Transverse colon (tissue), 4 donors: ENCODE measurements at regions of chr2 and their contacts with region 1.

Region 1: DNA sequence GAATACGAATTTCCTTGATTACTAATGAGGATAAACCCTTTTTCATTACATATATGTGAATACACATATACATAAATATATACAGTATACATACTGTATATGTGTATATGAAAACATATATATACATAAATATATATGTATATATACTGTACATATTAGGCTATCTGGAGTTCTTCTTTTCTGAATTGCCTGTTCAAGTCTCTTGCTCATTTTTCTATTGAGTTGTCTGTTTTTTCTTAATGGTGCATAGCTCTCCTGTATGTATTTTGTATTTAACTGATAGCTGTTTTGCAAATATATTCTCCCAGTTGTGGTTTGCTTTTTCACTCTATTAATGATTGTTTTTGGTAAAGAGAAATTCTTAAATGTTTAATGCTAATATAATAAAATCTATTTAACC is 8.9 kb upstream of the GCFC2 start:
- DNase-seq: no peak
- H3K4me3 ChIP-seq: no peak overlapping the region
- H3K27ac ChIP-seq: no peak overlapping the region
- H3K4me1 ChIP-seq: no peaks in the 10 kb centered on the region
- H3K27me3 ChIP-seq: no peaks in the 10 kb centered on the region
- CTCF ChIP-seq: no peak
- EP300 ChIP-seq: no peak
- POLR2A ChIP-seq: no peak

Region 2: GRCh38 chr2:75667884-75668283 is 51.7 kb before region 1 on chr2:
- in situ Hi-C with region 1: no loop called
- intact Hi-C with region 1: loop called (anchors 2 kb)
- DNase-seq: no peak
- H3K4me3 ChIP-seq: no peak overlapping the region
- H3K27ac ChIP-seq: no peak overlapping the region
- H3K4me1 ChIP-seq: no peaks in the 10 kb centered on the region
- H3K27me3 ChIP-seq: no peaks in the 10 kb centered on the region
- CTCF ChIP-seq: no peak
- EP300 ChIP-seq: no peak
- POLR2A ChIP-seq: no peak